Naive thymus-derived CD4-positive, alpha-beta T cell (primary cell): ENCODE measurements at regions of chr1 and their contacts with region 1.

Region 1: GRCh38 chr1:32013386-32014198 is at the start of gene KHDRBS1:
- DNase-seq: peak; percentile 94 to 99 (median 98)
- ATAC-seq: peak; percentile 93
- H3K4me3 ChIP-seq: peak within 1 kb of the TSS; percentile 98
- H3K4me3 Mint-ChIP-seq: peak within 1 kb of the TSS; percentile 89 to 98 (median 96)
- H3K27ac ChIP-seq: peak within 1 kb of the TSS; percentile 96
- H3K27ac Mint-ChIP-seq: peak within 1 kb of the TSS; percentile 90 to 99 (median 97)
- H3K4me1 ChIP-seq: peaks cover 10 to 14% of the 10 kb centered on the region in 2 donors
- H3K4me1 Mint-ChIP-seq: peaks cover 17 to 45% (median 31%) of the 10 kb centered on the region in 7 donors
- H3K27me3 ChIP-seq: no peaks in the 10 kb centered on the region
- H3K27me3 Mint-ChIP-seq: peaks cover 0 to 2% (median 0%) of the 10 kb centered on the region in 5 donors
- total RNA-seq, gene KHDRBS1: 89.2 to 162 (median 125) TPM

Region 2: GRCh38 chr1:31762726-31763670 is 250.6 kb before region 1 on chr1:
- CTCF ChIA-PET with region 1: interaction called, 4 read pairs
- POLR2A ChIA-PET with region 1: no interaction called
- intact Hi-C with region 1: loop called in 1 of 2 experiments (anchors 5 kb)
- DNase-seq: peak; percentile 51 to 81 (median 67)
- ATAC-seq: peak; percentile 64
- H3K4me3 ChIP-seq: peak overlapping the region; percentile 48
- H3K4me3 Mint-ChIP-seq: peak overlapping the region; percentile 71 to 89 (median 82)
- H3K27ac ChIP-seq: no peak overlapping the region
- H3K27ac Mint-ChIP-seq: no peak overlapping the region
- H3K4me1 ChIP-seq: peaks cover 23 to 32% of the 10 kb centered on the region in 2 donors
- H3K4me1 Mint-ChIP-seq: peaks cover 6 to 32% (median 26%) of the 10 kb centered on the region in 7 donors
- H3K27me3 ChIP-seq: no peaks in the 10 kb centered on the region
- H3K27me3 Mint-ChIP-seq: peaks cover 0 to 79% (median 4%) of the 10 kb centered on the region in 5 donors

Region 3: GRCh38 chr1:31938174-31938950 is 75.2 kb before region 1 on chr1 and contains the start of gene PTP4A2:
- CTCF ChIA-PET with region 1: no interaction called
- POLR2A ChIA-PET with region 1: interaction called, 16 read pairs
- intact Hi-C with region 1: loop called (anchors 1 to 2 kb)
- DNase-seq: peak; percentile 65 to 93 (median 81)
- ATAC-seq: peak; percentile 84
- H3K4me3 ChIP-seq: peak within 1 kb of the TSS; percentile 81
- H3K4me3 Mint-ChIP-seq: peak within 1 kb of the TSS; percentile 92 to 100 (median 96)
- H3K27ac ChIP-seq: peak within 1 kb of the TSS; percentile 81
- H3K27ac Mint-ChIP-seq: peak within 1 kb of the TSS; percentile 90 to 99 (median 95)
- H3K4me1 ChIP-seq: peaks cover 66 to 67% of the 10 kb centered on the region in 2 donors
- H3K4me1 Mint-ChIP-seq: peaks cover 54 to 82% (median 73%) of the 10 kb centered on the region in 7 donors
- H3K27me3 ChIP-seq: no peaks in the 10 kb centered on the region
- H3K27me3 Mint-ChIP-seq: no peaks in the 10 kb centered on the region
- total RNA-seq, gene PTP4A2: 196 to 449 (median 271) TPM

Region 4: GRCh38 chr1:32031578-32032274 is 18.1 kb after region 1 on chr1:
- CTCF ChIA-PET with region 1: no interaction called
- POLR2A ChIA-PET with region 1: interaction called, 4 read pairs
- intact Hi-C with region 1: loop called in 1 of 2 experiments (anchors 2 kb)
- DNase-seq: no peak
- ATAC-seq: no peak
- H3K4me3 ChIP-seq: no peak overlapping the region
- H3K4me3 Mint-ChIP-seq: no peak overlapping the region
- H3K27ac ChIP-seq: no peak overlapping the region
- H3K27ac Mint-ChIP-seq: peak overlapping the region in 6 of 9 donors; percentile 16 to 59 (median 32)
- H3K4me1 ChIP-seq: peaks cover 6% of the 10 kb centered on the region in 2 donors
- H3K4me1 Mint-ChIP-seq: peaks cover 29 to 72% (median 67%) of the 10 kb centered on the region in 7 donors
- H3K27me3 ChIP-seq: no peaks in the 10 kb centered on the region
- H3K27me3 Mint-ChIP-seq: no peaks in the 10 kb centered on the region

Region 5: DNA sequence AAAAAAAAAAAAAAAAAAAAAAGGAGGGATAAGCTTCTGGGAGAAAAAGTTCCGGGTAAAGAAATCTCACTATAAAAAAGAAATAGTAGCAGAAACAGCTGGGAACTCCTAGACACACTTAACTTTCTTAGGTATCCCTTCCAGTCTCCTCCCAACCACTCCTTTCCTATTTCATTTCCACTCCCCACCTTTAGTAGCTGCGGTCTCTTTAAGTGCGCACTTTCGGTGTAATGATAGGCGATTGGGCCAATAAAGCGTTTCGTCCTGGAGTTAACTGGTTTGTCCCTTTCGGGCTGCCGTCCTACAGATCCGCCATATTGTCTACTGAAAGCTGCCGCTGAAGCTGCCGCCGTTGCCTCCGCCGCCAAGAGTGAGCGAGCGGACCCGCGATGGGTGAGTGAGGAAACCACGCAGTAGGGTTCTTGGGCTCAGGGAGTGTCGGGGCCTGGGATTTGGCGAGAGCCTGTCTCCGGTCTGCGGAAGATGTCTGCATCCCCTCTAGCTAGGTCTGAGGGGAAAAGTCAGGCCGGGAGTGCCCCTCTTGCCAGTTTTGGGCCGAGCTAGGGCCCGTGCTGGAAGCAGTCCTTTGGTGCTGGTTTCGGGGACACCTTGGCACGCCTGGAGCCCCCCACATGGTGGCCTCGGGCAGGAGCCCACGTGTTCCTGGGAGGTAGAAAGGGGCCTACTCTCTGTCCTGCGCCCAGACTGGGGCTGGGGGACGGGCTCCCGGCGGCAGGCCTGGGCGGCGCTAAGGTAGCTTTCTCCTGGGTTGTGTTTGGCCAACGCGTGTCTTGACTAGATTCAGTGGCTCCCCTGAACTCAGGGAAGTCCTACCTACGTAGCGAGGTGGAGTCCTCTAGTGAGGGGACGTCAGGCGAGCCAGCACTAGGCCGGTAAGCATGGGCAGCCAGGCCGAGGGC is 94.4 kb after region 1 on chr1 and contains the start of gene KPNA6:
- CTCF ChIA-PET with region 1: interaction called, 3 read pairs
- POLR2A ChIA-PET with region 1: interaction called, 7 read pairs
- intact Hi-C with region 1: loop called (anchors 1 kb)
- DNase-seq: peak; percentile 75 to 95 (median 93)
- ATAC-seq: peak; percentile 94
- H3K4me3 ChIP-seq: peak within 1 kb of the TSS; percentile 75
- H3K4me3 Mint-ChIP-seq: peak within 1 kb of the TSS; percentile 95 to 100 (median 99)
- H3K27ac ChIP-seq: peak within 1 kb of the TSS; percentile 94
- H3K27ac Mint-ChIP-seq: peak within 1 kb of the TSS; percentile 93 to 99 (median 98)
- H3K4me1 ChIP-seq: peaks cover 37 to 40% of the 10 kb centered on the region in 2 donors
- H3K4me1 Mint-ChIP-seq: peaks cover 27 to 63% (median 47%) of the 10 kb centered on the region in 7 donors
- H3K27me3 ChIP-seq: no peaks in the 10 kb centered on the region
- H3K27me3 Mint-ChIP-seq: no peaks in the 10 kb centered on the region
- total RNA-seq, gene KPNA6: 47.4 to 63.7 (median 51.6) TPM

Region 6: GRCh38 chr1:32205401-32206370 is 192.1 kb after region 1 on chr1 and contains the start of gene IQCC:
- CTCF ChIA-PET with region 1: no interaction called
- POLR2A ChIA-PET with region 1: interaction called, 3 read pairs
- intact Hi-C with region 1: loop called (anchors 1 to 10 kb)
- DNase-seq: peak; percentile 77 to 89 (median 83)
- ATAC-seq: peak; percentile 77
- H3K4me3 ChIP-seq: peak within 1 kb of the TSS; percentile 81
- H3K4me3 Mint-ChIP-seq: peak within 1 kb of the TSS; percentile 80 to 91 (median 88)
- H3K27ac ChIP-seq: peak within 1 kb of the TSS; percentile 80
- H3K27ac Mint-ChIP-seq: peak within 1 kb of the TSS; percentile 42 to 95 (median 86)
- H3K4me1 ChIP-seq: peaks cover 18 to 28% of the 10 kb centered on the region in 2 donors
- H3K4me1 Mint-ChIP-seq: peaks cover 17 to 45% (median 33%) of the 10 kb centered on the region in 7 donors
- H3K27me3 ChIP-seq: no peaks in the 10 kb centered on the region
- H3K27me3 Mint-ChIP-seq: no peaks in the 10 kb centered on the region
- total RNA-seq, gene IQCC: 2.3 to 4.6 (median 2.5) TPM